Breast epithelium (tissue), 4 donors: ENCODE measurements at regions of chr3 and their contacts with region 1.

Region 1: GRCh38 chr3:183142199-183142598 is 20.3 kb downstream of the LAMP3 start:
- DNase-seq: no peak
- H3K4me3 ChIP-seq: no peak overlapping the region
- H3K27ac ChIP-seq: no peak overlapping the region
- H3K4me1 ChIP-seq: no peaks in the 10 kb centered on the region
- H3K27me3 ChIP-seq: no peaks in the 10 kb centered on the region
- CTCF ChIP-seq: no peak
- POLR2A ChIP-seq: no peak

Region 2: GRCh38 chr3:183156266-183156665 is 14.1 kb after region 1 on chr3:
- intact Hi-C with region 1: loop called (anchors 1 kb)
- DNase-seq: no peak
- H3K4me3 ChIP-seq: no peak overlapping the region
- H3K27ac ChIP-seq: no peak overlapping the region
- H3K4me1 ChIP-seq: no peaks in the 10 kb centered on the region
- H3K27me3 ChIP-seq: no peaks in the 10 kb centered on the region
- CTCF ChIP-seq: no peak
- POLR2A ChIP-seq: no peak

Region 3: DNA sequence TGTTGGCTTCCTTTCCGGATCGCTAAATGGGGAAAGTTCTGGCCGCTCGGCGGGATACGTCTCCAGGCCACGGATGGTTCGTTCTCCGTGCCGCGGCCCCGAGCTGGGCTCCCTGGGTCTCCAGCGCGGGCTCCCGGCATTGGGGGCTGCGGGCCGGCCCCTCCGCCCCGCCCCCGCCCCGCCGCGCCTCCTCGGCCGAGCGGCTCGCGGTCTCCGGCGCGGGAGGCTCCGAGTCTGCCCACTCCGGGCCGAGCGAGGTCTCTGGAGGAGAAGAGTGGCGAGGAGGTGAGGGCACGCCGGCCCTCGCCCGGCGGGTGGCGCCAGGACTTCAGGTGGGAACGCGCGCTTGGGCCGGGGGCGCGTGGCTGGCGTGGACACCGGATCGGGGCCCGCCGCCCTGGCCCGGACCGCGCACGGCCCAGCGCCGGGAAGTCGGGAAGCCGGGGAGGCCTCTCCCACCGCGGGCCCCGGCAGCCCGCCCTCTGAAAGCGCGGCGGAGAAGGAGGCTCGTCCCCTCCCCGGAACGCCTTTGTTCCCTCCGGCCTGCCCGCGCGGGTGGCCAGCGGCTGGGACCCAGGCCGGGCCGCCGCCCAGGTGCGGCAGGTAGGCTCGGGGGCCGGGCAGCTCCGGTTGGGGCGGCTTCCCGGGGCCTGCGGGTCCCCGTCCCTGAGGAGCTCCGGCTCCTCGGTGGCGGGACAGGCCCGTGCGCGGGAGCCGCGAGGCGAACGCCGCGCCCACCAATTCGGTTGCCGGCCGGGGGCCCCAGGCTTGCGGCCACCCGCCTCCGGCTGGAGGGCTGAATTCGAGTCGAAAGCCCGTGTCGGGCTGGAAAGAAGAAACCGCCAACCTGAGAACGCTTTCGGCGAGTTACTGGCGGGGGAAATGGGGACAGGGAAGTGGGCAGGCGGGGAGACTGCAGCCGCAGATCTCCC is 112.0 kb after region 1 on chr3:
- intact Hi-C with region 1: no loop called
- DNase-seq: no peak
- H3K4me3 ChIP-seq: peak overlapping the region; percentile 64 to 87 (median 84)
- H3K27ac ChIP-seq: peak overlapping the region; percentile 93 to 95
- H3K4me1 ChIP-seq: no peaks in the 10 kb centered on the region
- H3K27me3 ChIP-seq: no peaks in the 10 kb centered on the region
- CTCF ChIP-seq: no peak
- POLR2A ChIP-seq: no peak